Naive thymus-derived CD8-positive, alpha-beta T cell (primary cell): ENCODE measurements at regions of chr3 and their contacts with region 1.

Region 1: GRCh38 chr3:49120438-49121131 is at the start of gene USP19:
- DNase-seq: peak; percentile 87 to 97 (median 94)
- ATAC-seq: peak; percentile 91
- H3K4me3 Mint-ChIP-seq: peak within 1 kb of the TSS; percentile 76 to 92 (median 87)
- H3K27ac Mint-ChIP-seq: peak within 1 kb of the TSS; percentile 88 to 96 (median 94)
- H3K4me1 Mint-ChIP-seq: peaks cover 6 to 35% (median 29%) of the 10 kb centered on the region in 4 donors
- H3K27me3 Mint-ChIP-seq: no peaks in the 10 kb centered on the region
- polyA plus RNA-seq, gene USP19: 19.5 to 42.2 (median 29.2) TPM

Region 2: DNA sequence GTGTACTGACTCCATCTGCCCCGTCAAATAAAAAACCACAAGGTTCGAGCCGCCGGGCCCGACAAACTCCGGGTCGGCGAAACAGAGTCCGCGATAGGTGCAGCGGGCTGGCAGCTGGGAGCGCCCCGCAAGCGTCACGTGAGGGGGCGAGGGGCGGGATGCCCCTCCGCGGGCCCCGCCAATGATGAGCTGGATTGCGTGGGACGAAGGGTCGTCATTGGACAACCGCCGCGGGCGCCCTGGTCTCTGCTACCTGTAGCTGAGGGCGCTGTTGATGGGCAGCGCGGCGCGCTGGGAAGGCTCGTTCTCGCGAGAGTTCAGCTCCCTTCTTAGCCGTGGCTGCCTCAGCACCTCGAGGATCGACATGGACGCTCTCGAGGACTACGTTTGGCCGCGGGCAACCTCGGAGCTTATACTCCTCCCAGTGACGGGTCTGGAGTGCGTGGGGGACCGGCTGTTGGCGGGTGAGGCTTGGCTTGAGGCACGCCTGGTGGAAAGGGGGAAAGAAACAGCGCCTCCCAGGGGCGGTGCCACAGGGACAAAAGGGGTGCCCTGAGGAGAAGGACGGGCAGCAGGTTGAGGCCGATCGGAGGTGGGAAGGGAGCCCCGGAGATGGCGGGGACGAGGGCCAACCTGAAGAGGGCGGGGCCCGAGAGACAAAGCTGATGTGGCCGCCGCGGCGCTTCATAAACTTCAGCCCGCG is 113.4 kb before region 1 on chr3 and contains the start of gene WDR6:
- POLR2A ChIA-PET with region 1: interaction called, 17 read pairs
- DNase-seq: peak; percentile 95 to 99 (median 97)
- ATAC-seq: peak; percentile 92 to 93
- H3K4me3 Mint-ChIP-seq: peak within 1 kb of the TSS; percentile 94 to 100 (median 99)
- H3K27ac Mint-ChIP-seq: peak within 1 kb of the TSS; percentile 97 to 100 (median 99)
- H3K4me1 Mint-ChIP-seq: peaks cover 24 to 46% (median 29%) of the 10 kb centered on the region in 4 donors
- H3K27me3 Mint-ChIP-seq: no peaks in the 10 kb centered on the region
- polyA plus RNA-seq, gene WDR6: 96.3 to 126 (median 111) TPM

Region 3: GRCh38 chr3:49021813-49022687 is 98.5 kb before region 1 on chr3 and contains the start of gene NDUFAF3:
- POLR2A ChIA-PET with region 1: interaction called, 18 read pairs
- DNase-seq: peak; percentile 81 to 93 (median 90)
- ATAC-seq: peak; percentile 77 to 83
- H3K4me3 Mint-ChIP-seq: peak within 1 kb of the TSS; percentile 90 to 99 (median 98)
- H3K27ac Mint-ChIP-seq: peak within 1 kb of the TSS; percentile 96 to 99 (median 98)
- H3K4me1 Mint-ChIP-seq: peaks cover 12 to 65% (median 52%) of the 10 kb centered on the region in 4 donors
- H3K27me3 Mint-ChIP-seq: peaks cover 0 to 1% (median 0%) of the 10 kb centered on the region in 5 donors
- polyA plus RNA-seq, gene NDUFAF3: 140 to 226 (median 202) TPM

Region 4: GRCh38 chr3:49104483-49105291 is 15.9 kb before region 1 on chr3 and contains the start of gene QARS1:
- POLR2A ChIA-PET with region 1: interaction called, 51 read pairs
- DNase-seq: peak; percentile 79 to 95 (median 86)
- ATAC-seq: peak; percentile 98 to 99
- H3K4me3 Mint-ChIP-seq: peak within 1 kb of the TSS; percentile 90 to 99 (median 96)
- H3K27ac Mint-ChIP-seq: peak within 1 kb of the TSS; percentile 96 to 99 (median 98)
- H3K4me1 Mint-ChIP-seq: peaks cover 11 to 43% (median 33%) of the 10 kb centered on the region in 4 donors
- H3K27me3 Mint-ChIP-seq: no peaks in the 10 kb centered on the region
- polyA plus RNA-seq, gene QARS1: 89.1 to 125 (median 94.8) TPM

Region 5: GRCh38 chr3:49165771-49166751 is 45.5 kb after region 1 on chr3 and contains the start of gene CCDC71:
- POLR2A ChIA-PET with region 1: interaction called, 29 read pairs
- DNase-seq: peak; percentile 59 to 86 (median 72)
- ATAC-seq: peak; percentile 82 to 86
- H3K4me3 Mint-ChIP-seq: peak within 1 kb of the TSS; percentile 89 to 98 (median 92)
- H3K27ac Mint-ChIP-seq: peak within 1 kb of the TSS; percentile 91 to 98 (median 95)
- H3K4me1 Mint-ChIP-seq: peaks cover 22 to 55% (median 43%) of the 10 kb centered on the region in 4 donors
- H3K27me3 Mint-ChIP-seq: no peaks in the 10 kb centered on the region
- polyA plus RNA-seq, gene CCDC71: 1.6 to 2.0 (median 1.8) TPM

Region 6: DNA sequence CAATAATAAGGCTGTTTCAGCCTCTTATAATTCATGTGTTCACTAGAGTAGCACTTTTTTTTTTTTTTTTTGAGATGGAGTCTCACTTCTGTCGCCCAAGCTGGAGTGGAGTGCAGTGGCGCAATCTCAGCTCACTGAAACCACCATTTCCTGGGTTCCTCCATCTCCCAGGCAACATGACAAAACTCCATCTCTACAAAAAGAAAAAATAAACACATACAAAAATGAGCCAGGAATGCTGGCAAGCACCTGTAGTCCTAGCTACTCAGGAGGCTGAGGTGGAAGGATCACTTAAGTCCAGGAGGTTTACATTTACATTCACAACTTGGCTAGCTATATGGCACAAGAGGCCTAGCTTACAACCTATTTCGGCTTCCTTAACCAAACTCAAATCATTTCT is 212.5 kb after region 1 on chr3:
- POLR2A ChIA-PET with region 1: no interaction called
- DNase-seq: peak in 5 of 10 donors; percentile 14 to 52 (median 30)
- ATAC-seq: peak; percentile 83 to 89
- H3K4me3 Mint-ChIP-seq: peak overlapping the region in 6 of 10 donors; percentile 22 to 54 (median 48)
- H3K27ac Mint-ChIP-seq: peak overlapping the region; percentile 80 to 97 (median 92)
- H3K4me1 Mint-ChIP-seq: peaks cover 11 to 42% (median 24%) of the 10 kb centered on the region in 4 donors
- H3K27me3 Mint-ChIP-seq: no peaks in the 10 kb centered on the region